ENCODE measurements at regions of chr19 and their contacts with region 1.

Region 1: DNA sequence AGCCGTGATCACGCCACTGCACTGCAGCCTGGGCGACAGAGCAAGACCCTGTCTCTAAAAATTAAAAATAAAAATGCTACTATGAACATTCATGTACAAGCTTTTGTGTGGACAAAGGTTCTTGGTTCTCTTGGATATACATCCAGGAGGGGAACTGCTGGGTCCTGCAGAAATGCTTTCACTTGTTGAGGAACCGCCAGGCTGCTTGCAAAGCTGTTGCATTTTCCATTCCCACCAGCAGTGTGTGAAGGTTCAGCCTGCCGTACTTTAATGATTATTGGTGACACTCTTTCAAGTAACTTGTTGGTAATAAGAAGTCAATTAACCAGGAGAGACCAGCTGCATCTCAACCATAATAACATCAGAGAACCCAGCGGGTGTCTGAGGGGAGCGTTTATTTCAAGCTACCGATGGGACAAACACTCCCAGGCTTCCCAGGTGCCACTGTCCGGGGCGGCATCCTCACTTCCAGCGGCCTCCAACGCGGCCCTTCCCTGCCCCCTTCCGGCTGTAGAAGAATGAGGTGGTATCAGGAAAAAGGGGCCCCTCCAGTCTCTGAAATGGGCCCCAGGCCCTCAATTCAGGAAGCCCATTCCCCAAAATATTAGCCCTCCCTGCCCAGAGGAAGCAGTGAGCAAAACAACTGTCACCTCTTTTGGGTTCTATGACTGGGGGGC is 15.2 kb upstream of the PPP1R12C start:
- DNase-seq: peak in 1 of 2 donors; percentile 40
- ATAC-seq: no peak
- H3K4me3 ChIP-seq: no peak overlapping the region
- H3K27ac ChIP-seq: no peak overlapping the region
- H3K4me1 ChIP-seq: no peaks in the 10 kb centered on the region
- H3K27me3 ChIP-seq: peaks cover 0 to 20% (median 3%) of the 10 kb centered on the region in 3 donors
- CTCF ChIP-seq: no peak

Region 2: GRCh38 chr19:55624109-55625003 is 491.8 kb after region 1 on chr19 and contains the start of gene ZNF784:
- intact Hi-C with region 1: loop called in 1 of 2 experiments (anchors 10 kb)
- DNase-seq: peak; percentile 93 to 97
- ATAC-seq: peak; percentile 84 to 90 (median 88)
- H3K4me3 ChIP-seq: peak within 1 kb of the TSS; percentile 65
- H3K27ac ChIP-seq: peak within 1 kb of the TSS; percentile 90
- H3K4me1 ChIP-seq: peaks cover 37% of the 10 kb centered on the region
- H3K27me3 ChIP-seq: no peaks in the 10 kb centered on the region
- CTCF ChIP-seq: no peak
- total RNA-seq, gene ZNF784: 9.0 to 22.2 (median 11.4) TPM